Sigmoid colon (tissue), 7 donors: ENCODE measurements at regions of chr3 and their contacts with region 1.

Region 1: GRCh38 chr3:192444096-192444790 is 283.1 kb downstream of the FGF12 start:
- DNase-seq: peak; percentile 72
- H3K4me3 ChIP-seq: no peak overlapping the region
- H3K27ac ChIP-seq: no peak overlapping the region
- H3K4me1 ChIP-seq: no peaks in the 10 kb centered on the region
- H3K27me3 ChIP-seq: peaks cover 0 to 27% (median 7%) of the 10 kb centered on the region in 3 donors
- CTCF ChIP-seq: peak; percentile 58 to 96 (median 75)
- EP300 ChIP-seq: no peak
- POLR2A ChIP-seq: no peak

Region 2: DNA sequence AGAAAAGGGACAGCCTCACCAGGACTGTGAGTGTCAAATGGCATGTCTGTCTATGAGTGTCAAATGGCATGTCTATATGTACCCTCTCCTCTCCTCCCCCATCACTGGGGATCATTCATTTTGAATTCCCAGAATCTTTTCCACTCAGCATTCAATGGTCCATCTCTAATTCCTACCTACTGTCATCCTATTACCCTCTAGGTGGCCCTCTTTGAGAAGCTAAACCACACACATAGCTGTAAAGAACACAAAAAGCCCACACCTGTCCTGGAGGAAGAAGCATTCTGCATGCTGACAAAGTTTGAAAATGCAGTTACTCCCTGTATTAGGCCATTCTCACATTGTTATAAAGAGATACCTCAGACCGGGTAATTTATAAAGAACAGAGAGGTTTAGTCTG is 1029.5 kb before region 1 on chr3:
- intact Hi-C with region 1: loop called (anchors 5 kb)
- DNase-seq: no peak
- H3K4me3 ChIP-seq: no peak overlapping the region
- H3K27ac ChIP-seq: no peak overlapping the region
- H3K4me1 ChIP-seq: no peaks in the 10 kb centered on the region
- H3K27me3 ChIP-seq: no peaks in the 10 kb centered on the region
- CTCF ChIP-seq: no peak
- EP300 ChIP-seq: no peak
- POLR2A ChIP-seq: no peak

Region 3: GRCh38 chr3:192130534-192131132 is 313.6 kb before region 1 on chr3:
- intact Hi-C with region 1: loop called (anchors 2 kb)
- DNase-seq: no peak
- H3K4me3 ChIP-seq: no peak overlapping the region
- H3K27ac ChIP-seq: no peak overlapping the region
- H3K4me1 ChIP-seq: no peaks in the 10 kb centered on the region
- H3K27me3 ChIP-seq: no peaks in the 10 kb centered on the region
- CTCF ChIP-seq: peak in 3 of 4 experiments; percentile 14 to 52 (median 40)
- EP300 ChIP-seq: no peak
- POLR2A ChIP-seq: no peak

Region 4: GRCh38 chr3:192188218-192188835 is 255.9 kb before region 1 on chr3:
- intact Hi-C with region 1: loop called (anchors 5 kb)
- DNase-seq: no peak
- H3K4me3 ChIP-seq: no peak overlapping the region
- H3K27ac ChIP-seq: no peak overlapping the region
- H3K4me1 ChIP-seq: no peaks in the 10 kb centered on the region
- H3K27me3 ChIP-seq: no peaks in the 10 kb centered on the region
- CTCF ChIP-seq: peak in 1 of 4 experiments; percentile 41
- EP300 ChIP-seq: no peak
- POLR2A ChIP-seq: no peak